ENCODE measurements at regions of chr11 and their contacts with region 1.

Region 1: DNA sequence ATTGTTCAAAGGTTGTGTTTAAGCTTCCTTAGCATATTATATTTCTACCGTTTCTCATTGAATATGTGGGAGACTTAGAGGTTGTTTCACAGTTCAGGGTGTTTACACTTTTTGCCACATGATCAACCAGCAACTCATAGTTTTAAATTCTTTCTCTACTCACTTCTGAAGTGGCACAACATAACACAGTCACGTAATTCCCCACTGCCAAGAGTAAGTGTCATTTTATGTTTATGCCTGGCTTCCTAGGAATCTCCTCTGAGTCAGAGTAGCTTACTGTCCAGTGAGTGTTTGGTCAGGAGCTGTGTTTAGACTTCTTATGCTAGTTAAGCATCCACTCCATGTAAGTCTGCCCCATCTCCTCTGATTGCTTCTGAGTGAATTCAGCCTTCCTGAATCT is 520.8 kb upstream of the KIRREL3 start:
- DNase-seq: no peak
- ATAC-seq: no peak

Region 2: DNA sequence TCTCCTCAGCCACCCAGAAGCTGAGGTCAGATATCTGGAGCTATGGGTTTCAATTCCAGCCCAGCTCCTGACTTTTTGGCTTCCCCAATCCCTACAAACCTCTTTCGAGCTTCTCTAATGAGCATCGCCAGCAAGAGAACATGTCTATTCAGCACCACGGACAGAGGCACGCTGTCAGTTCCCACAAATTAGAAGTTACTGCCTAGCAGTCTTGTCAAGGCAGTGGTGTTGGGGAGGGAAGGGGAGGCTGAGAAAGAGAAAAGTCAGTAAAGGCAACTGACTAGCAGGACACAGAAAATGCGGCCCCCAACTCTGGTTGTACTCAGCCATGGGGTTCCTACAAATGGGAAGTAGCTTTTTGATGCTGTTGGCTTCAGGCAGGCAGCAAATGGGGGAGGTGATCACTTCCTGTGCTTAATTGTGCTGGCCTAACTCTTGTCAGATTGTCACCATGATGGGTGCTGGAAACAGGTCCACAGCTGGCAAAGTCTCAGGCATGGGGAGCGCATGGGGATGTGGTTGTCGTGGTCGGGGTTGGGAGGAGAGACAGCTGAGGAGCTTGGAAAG is 960.0 kb before region 1 on chr11:
- intact Hi-C with region 1: loop called (anchors 10 kb)
- DNase-seq: no peak
- ATAC-seq: no peak

Measured in left ventricle myocardium superior (tissue), 1 donor.